Motor neuron (in vitro differentiated cells): ENCODE measurements at regions of chr12 and their contacts with region 1.

Region 1: DNA sequence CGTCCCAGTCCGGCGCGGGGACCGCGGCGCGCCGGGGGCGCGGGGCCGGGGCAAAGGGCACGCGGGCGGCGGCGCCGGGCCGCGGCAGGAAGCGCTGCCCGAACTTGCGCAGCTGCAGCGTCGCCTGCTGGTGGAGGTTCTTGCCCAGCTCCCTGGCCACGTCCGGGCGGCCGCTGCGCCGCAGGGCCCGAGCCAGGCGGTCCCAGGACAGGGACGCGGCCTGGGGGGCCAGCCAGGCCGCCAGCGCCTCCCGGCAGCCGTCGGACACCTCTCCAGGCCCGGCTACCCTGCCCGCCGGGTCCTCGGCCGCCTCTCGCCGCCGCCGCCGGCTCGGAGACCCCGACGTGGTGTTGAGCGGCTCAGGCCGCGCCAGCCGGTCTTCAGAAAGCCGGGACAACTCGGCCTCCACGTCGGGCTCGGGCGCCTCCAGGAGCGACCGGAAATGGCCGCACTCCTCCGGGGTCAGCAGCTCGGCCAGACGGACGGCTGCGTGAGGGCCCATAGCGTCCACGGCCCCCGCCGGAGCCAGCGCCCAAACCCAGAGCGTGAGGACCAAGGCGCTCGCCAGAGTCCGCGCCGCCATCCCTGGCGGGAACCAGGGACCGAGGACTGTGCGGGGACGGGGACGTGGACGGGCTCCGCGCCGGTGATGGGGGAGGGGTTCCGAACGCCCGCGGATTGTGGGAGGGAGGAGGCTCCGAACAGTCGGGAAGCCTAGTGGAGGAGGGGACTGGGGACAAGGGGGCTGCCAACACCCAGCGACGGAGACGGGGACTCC is 34.0 kb downstream of the FIGNL2 start:
- ATAC-seq: peak; percentile 83 to 96 (median 87)
- H3K4me3 ChIP-seq: peak overlapping the region; percentile 30 to 43 (median 33)
- H3K27ac ChIP-seq: no peak overlapping the region
- H3K4me1 ChIP-seq: peaks cover 0 to under 1% of the 10 kb centered on the region in 2 donors

Region 2: DNA sequence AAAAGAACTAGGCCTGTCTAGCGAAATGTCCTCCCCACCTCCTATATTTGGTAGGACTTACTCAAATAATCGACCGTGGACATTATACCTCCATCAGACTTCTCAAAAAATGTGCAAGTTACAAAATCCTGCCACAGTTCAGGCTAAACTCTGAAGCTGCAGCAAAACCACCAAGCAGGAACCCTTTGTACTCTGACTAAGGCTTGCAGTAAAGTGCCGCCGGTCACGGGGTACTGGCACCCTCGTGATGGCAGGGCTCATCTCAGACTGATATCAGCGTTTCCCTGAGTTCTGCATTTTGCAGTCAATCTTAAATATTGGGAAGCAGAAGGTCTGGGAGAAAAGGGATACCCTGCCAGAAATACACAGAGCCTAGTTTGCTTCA is 805.5 kb before region 1 on chr12:
- in situ Hi-C with region 1: no loop called
- ATAC-seq: peak in 5 of 8 experiments; percentile 25 to 56 (median 34)
- H3K4me3 ChIP-seq: no peak overlapping the region
- H3K27ac ChIP-seq: no peak overlapping the region
- H3K4me1 ChIP-seq: peaks cover 0 to 2% of the 10 kb centered on the region in 2 donors

Region 3: DNA sequence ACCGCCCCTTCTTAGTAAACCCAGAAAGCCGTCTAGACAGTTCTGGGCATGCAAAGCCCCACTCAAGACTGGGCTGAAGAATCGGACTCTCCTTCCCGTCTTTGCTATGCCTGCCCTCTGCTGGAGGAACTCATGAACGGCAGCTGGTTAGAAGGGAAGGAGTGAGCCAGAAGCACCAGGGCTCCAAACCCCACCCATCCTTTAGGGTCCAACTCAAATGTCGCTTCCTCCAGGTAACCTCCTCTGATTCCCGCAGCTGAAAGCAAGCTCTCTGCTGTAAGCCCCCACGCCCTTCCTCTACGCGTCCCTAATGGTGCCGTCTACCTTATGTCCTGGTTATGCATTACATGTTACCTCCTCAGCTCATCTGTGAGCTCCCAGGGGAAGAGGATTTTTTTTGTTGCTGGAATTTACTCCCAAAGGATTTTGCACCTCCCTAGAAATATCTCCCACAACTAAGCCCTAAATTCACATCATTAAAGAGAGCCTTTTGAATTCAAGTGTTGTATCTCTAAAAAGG is 282.5 kb before region 1 on chr12:
- in situ Hi-C with region 1: loop called in 1 of 9 experiments (anchors 25 kb)
- ATAC-seq: peak; percentile 92 to 98 (median 96)
- H3K4me3 ChIP-seq: no peak overlapping the region
- H3K27ac ChIP-seq: no peak overlapping the region
- H3K4me1 ChIP-seq: peaks cover 0 to 3% of the 10 kb centered on the region in 2 donors